ENCODE measurements at regions of chr3 and their contacts with region 1.

Region 1: DNA sequence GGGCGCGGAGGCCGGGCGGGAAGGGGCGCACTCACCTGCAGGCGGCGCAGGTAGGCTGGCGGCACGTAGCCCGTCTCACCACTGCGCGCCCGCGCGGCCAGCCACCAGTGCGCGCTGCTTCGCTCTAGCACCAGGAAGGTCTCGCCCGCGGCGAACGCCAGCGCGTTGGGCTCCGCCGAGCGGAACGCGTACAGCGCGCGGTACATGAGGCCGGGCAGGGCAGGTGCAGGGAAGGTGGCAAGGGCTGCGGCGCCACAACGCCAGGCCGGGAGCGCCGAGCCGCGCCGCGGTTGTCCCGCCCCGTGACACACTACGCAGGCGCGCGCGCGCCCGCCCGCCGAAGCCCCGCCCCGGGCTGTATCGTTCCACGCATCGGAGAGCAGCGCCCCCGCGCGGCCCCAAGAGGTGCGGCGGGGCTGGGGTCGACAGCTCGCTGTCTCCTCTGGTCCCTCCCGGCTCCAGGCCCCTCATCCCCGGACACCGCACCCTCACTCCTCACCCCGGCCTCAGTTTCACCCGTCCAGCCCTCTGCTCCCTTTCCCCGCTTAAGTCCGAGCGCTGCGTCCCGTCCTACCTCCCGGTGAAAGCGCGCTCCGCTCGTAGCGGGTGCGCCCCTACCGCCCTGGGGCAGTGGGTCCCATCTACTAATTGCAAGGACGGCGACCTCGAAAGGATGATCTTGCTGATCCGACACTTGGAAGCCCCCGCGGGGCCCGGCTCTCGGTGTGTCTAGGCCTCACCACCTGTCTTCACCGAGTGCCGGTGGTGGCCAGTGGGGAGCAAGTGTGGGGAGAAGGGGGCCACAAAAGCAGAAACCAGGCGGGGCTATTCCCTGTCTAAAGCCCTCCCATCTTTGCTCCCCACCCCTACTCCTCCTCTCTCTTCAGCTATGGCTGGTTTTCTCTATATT is at the start of gene NCKIPSD:
- DNase-seq: no peak
- ATAC-seq: peak; percentile 90
- H3K4me3 ChIP-seq: peak within 1 kb of the TSS; percentile 69 to 81
- H3K27ac ChIP-seq: peak within 1 kb of the TSS; percentile 85
- H3K4me1 ChIP-seq: peaks cover 12% of the 10 kb centered on the region; the same call in 1 of the 2 replicates
- H3K27me3 ChIP-seq: no peaks in the 10 kb centered on the region
- CTCF ChIP-seq: peak; percentile 94
- total RNA-seq, gene NCKIPSD: 26.8 TPM

Region 2: DNA sequence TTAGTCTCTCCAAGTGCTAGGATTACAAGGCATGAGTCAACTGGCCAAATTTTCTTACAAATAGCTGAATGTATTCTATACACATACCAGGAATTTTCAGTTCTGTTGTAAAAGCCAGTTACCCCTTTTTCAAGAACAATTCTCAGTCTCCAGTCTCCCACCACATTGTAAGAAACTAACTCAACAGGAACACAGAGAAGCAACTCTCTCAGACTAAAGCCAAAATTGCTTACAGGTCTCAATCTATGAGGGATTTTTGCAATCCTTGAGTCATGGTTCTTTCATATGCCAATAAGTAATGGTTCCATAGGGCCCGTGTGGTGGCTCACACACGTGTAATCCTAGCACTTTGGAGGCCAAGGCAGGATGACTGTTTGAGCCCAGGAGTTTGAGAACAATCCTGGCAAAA is 22.6 kb after region 1 on chr3:
- CTCF ChIA-PET with region 1: interaction called, 16 read pairs
- POLR2A ChIA-PET with region 1: no interaction called
- in situ Hi-C with region 1: no loop called
- intact Hi-C with region 1: no loop called
- DNase-seq: no peak
- ATAC-seq: no peak
- H3K4me3 ChIP-seq: no peak overlapping the region
- H3K27ac ChIP-seq: no peak overlapping the region
- H3K4me1 ChIP-seq: peaks cover 3% of the 10 kb centered on the region
- H3K27me3 ChIP-seq: no peaks in the 10 kb centered on the region
- CTCF ChIP-seq: no peak

Region 3: GRCh38 chr3:48739955-48740823 is 54.3 kb after region 1 on chr3:
- CTCF ChIA-PET with region 1: interaction called, 14 read pairs
- POLR2A ChIA-PET with region 1: no interaction called
- in situ Hi-C with region 1: no loop called
- intact Hi-C with region 1: no loop called
- DNase-seq: no peak
- ATAC-seq: peak; percentile 97
- H3K4me3 ChIP-seq: no peak overlapping the region
- H3K27ac ChIP-seq: no peak overlapping the region
- H3K4me1 ChIP-seq: peaks cover 3% of the 10 kb centered on the region
- H3K27me3 ChIP-seq: no peaks in the 10 kb centered on the region
- CTCF ChIP-seq: peak; percentile 89

Measured in Panc1 (cell line).